ENCODE measurements at regions of chr17 and their contacts with region 1.

Region 1: DNA sequence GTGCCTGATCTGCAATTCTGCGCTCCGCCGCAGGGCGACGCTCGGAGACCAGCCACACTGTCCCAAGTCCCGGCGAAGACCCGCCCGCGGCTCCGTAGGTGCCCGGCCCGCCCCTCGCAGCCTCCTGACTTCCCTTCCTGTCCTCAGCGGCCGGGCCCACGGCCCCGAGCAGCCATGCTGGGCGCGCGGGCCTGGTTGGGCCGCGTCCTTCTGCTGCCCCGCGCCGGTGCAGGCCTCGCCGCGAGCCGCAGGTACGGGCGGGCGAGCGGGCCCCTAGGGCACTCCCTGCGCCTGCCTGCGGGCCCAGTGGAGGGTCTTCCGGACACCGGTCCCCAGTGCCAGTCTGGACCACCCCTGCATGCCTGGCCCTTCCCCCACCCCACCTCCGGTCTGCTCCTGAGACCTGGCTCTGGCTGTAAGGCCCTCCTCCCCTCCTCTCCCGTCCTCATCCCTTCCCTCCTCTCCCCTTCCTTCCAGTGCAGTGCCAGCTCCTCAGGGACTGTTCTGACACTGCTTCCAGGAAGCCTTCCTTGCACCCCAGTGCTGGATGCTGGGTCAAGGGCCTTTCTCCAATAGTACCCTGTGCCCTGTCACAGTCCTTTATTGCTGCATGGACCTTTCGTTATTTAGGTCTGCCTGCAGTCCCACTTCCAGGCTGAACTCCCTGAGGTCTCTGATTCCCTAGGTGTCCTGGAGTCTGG is at the start of gene SPATA20:
- DNase-seq: peak; percentile 89 to 93
- ATAC-seq: peak; percentile 85 to 93 (median 88)
- H3K4me3 ChIP-seq: peak within 1 kb of the TSS; percentile 43 to 74 (median 66)
- H3K27ac ChIP-seq: peak within 1 kb of the TSS; percentile 6 to 94 (median 82)
- H3K4me1 ChIP-seq: peaks cover 0 to 37% (median 21%) of the 10 kb centered on the region in 9 donors
- H3K27me3 ChIP-seq: no peaks in the 10 kb centered on the region
- CTCF ChIP-seq: peak; percentile 95 to 100 (median 98)
- total RNA-seq, gene SPATA20: 18.5 to 80.6 (median 63.3) TPM

Region 2: DNA sequence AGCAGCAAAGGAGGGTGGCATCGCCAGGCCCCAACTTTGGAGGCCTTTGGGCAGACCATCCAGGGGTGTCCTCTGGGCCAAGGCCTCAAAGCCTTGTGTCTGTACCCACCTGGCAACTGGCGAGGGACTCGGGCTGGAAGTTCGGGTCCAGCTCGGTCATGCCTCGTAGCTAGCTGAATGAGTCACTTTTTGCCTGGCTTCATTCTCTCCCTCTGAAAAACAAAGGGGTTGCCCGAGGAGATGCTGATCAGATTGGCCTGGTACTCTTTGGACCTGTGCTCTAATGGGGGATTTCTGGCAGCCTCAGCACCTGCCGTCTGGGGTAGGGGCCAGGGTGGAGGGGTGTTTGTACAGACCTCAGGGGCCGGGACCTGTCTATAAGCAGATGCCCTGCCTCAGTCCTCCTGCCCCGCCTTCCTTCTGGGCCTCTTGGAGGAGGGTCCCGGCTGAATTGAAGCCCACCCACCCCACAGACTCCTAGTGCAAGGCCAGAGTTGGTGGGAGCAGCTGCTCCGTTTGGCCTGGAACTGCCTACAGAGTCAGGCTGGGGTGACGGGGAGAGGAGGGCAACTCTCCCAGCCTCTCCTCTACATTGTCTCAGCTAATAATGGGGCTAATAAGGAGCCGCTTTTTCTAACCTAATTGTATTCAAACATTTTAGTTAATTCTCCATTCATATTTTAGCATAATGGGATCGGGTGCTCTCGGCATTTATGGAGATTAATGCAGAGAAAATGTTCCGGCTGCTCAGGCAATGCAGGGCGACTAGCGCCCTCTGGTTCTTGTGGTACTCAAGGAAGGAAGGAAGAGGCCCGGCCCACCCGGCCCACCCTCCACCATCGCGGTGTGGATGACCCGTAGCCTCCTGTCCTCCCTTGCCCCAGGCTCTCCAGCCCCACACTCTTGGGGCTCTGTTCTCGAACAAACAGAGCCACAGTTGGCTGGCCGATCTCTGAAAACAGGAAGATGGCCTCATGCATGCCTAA is 66.1 kb after region 1 on chr17:
- intact Hi-C with region 1: loop called in 7 of 10 experiments (anchors 2 to 5 kb)
- DNase-seq: no peak
- ATAC-seq: peak in 3 of 8 donors; percentile 41 to 63 (median 57)
- H3K4me3 ChIP-seq: no peak overlapping the region
- H3K27ac ChIP-seq: no peak overlapping the region
- H3K4me1 ChIP-seq: peaks cover 0 to 12% (median 0%) of the 10 kb centered on the region in 9 donors
- H3K27me3 ChIP-seq: peaks cover 0 to 26% (median 7%) of the 10 kb centered on the region in 7 donors
- CTCF ChIP-seq: peak in 7 of 9 donors; percentile 24 to 64 (median 54)

Region 3: GRCh38 chr17:50672831-50673601 is 125.8 kb after region 1 on chr17:
- intact Hi-C with region 1: loop called in 1 of 10 experiments (anchors 5 kb)
- DNase-seq: peak in 1 of 2 donors; percentile 49
- ATAC-seq: peak; percentile 57 to 96 (median 86)
- H3K4me3 ChIP-seq: no peak overlapping the region
- H3K27ac ChIP-seq: peak overlapping the region in 2 of 10 donors; percentile 25 to 26
- H3K4me1 ChIP-seq: peaks cover 0 to 5% (median 0%) of the 10 kb centered on the region in 9 donors
- H3K27me3 ChIP-seq: no peaks in the 10 kb centered on the region
- CTCF ChIP-seq: no peak

Region 4: DNA sequence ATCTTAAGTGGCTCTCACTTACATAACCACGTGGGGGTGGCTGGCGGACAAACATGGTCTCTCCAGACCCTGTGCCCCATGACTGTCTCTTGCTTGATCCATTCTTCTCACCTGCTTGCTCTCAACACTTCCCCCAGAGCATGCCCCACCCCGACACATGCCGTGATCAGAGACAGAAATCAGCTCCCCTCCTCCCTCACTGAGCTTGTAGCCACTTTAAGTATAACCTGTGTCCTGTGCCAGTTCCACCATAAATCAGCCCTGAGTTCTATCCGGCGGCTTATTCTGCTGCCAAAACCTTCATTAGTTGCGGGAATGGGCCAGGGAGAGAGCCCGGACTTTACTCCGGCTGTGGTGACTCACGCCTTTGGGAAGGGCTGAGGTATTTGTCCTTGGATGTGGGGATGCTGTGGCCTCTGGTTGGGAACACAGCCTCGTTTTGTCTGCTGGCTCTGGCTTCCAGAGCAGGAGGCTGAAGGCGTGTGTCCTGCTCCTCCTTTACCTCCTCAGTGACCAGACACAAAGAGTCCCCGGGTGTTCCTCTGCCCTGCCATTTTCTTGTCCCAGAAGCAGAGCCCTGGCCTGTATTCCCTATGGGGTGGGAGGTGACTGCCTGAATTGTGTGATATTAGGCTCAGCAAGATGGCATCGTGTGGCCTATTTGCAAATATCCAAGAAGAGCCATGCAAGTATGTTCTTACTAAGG is 139.5 kb after region 1 on chr17:
- intact Hi-C with region 1: loop called in 9 of 10 experiments (anchors 1 to 5 kb)
- DNase-seq: peak in 1 of 2 donors; percentile 34
- ATAC-seq: peak; percentile 21 to 91 (median 77)
- H3K4me3 ChIP-seq: no peak overlapping the region
- H3K27ac ChIP-seq: peak overlapping the region in 7 of 10 donors; percentile 39 to 65 (median 56)
- H3K4me1 ChIP-seq: peaks cover 2 to 36% (median 13%) of the 10 kb centered on the region in 9 donors
- H3K27me3 ChIP-seq: no peaks in the 10 kb centered on the region
- CTCF ChIP-seq: no peak

Region 5: DNA sequence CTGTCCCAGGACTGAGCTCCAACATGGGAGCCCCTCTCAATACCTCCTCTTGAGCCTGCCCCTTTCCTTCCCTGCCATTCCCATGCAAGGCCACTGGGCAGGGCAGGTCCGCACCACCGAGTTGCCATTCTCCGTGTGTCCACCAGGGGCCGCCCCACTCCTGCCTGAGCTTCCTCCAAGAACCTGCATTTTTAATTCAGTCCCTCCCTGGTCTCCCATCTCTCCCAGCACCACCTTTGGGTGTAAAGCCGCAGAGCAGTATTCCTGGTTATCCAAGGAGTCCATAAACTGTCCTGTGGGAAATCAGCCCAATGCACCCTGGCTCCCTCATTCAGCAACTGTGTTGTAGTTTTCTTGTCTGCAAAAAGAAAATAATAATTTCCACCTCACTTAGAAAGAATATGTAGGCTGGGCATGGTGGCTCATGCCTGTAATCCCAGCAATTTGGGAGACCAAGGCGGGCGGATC is 236.0 kb after region 1 on chr17:
- intact Hi-C with region 1: loop called in 1 of 10 experiments (anchors 5 kb)
- DNase-seq: peak; percentile 86
- ATAC-seq: peak; percentile 82 to 91 (median 84)
- H3K4me3 ChIP-seq: no peak overlapping the region
- H3K27ac ChIP-seq: no peak overlapping the region
- H3K4me1 ChIP-seq: peaks cover 0 to 25% (median 3%) of the 10 kb centered on the region in 9 donors
- H3K27me3 ChIP-seq: peaks cover 0 to 4% (median 0%) of the 10 kb centered on the region in 7 donors
- CTCF ChIP-seq: peak; percentile 94 to 98 (median 96)

Region 6: DNA sequence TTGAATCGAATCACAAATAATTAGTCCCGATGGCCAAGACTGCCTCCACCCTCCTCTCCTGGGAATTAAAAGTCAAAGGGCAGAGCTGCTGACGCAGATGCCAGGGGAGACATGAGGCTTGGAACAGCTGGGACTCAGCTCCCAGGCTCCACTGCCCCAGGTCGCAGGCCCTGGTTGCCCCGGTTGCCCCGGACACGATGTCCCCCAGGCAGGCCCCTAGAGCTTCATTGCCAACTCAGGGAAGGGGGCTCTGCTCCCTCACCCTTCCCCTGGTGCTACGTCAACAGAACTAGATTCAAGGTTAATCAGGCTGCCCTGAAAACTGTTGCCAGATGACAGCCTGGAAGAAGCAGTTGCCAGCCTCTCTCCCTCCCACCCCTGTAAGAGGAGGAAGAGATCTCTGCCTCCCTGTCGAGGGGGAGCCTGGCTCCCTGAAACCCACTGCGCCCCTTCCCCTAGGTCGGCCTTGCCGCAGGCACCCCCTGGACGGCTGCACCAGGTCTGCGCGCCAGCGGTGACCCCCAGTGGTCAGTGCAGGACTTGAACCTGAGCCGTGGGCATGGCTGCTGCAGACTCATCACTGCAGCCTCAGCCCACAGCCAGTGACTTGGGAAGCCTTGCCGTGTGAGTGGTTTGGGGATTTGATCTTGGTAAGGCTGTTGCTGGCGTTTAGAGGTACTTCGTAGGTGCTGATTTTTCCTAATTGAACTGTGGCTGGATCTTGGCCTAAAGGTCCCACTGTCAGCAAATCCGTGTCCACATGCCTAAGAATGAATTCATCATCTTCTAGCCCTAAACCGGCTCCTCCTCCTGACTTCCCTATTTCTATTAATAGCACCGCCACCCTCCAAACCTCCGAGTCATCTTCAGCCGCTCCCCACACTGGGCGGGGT is 403.1 kb after region 1 on chr17:
- intact Hi-C with region 1: loop called in 5 of 10 experiments (anchors 5 to 10 kb)
- DNase-seq: peak; percentile 77 to 80
- ATAC-seq: peak; percentile 77 to 89 (median 85)
- H3K4me3 ChIP-seq: peak overlapping the region in 3 of 10 donors; percentile 0 to 5 (median 2)
- H3K27ac ChIP-seq: peak overlapping the region; percentile 44 to 88 (median 79)
- H3K4me1 ChIP-seq: peaks cover 22 to 64% (median 51%) of the 10 kb centered on the region in 9 donors
- H3K27me3 ChIP-seq: no peaks in the 10 kb centered on the region
- CTCF ChIP-seq: peak; percentile 75 to 93 (median 85)